Dendritic cell treated with granulocyte-macrophage colony-stimulating factor and Interleukin-4, amounts not matched to agents 40 ng/mL and 50 ng/mL, for 4 days (primary cell): ENCODE measurements at regions of chr13 and their contacts with region 1.

Region 1: DNA sequence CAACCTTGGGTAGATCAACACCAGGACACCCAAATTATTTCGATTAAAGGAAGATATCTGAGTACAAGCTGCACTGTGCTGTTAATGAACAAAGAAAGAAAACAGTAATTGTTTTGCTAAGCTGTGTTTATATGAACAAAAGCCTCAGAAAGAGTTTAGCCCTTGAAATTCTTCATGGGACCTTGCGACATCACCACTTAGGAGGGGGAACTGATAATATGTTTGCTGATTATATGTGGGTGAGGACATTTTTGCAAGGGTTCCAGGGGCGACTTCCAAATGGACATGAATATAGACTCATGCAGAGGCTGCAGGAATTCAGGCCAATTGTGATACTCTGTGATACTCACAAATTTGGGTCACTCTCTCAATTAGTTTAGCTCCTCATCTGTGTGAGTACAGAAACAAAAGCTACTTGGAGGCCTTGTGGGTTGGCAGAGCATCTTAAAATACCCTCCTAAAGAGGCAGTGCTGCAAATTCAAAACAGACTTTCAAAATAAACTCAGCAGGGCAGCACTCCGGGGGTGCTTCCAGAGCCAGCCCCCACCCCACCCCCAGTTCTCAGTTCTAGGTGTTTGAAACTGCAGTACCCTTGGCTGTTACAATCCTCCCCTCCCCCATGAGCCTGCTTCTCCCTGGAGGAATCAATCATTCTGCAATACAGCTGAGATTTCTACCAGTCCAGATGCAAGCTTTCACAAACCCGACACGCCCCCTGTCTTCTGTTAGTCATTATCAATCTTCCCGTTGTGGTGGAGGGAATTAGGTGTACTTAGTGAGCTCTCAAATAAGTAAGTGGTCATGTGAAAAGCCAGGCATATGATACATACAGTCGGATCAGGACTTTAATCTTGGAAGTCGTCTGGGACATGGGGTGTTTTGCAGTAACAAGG is 97.0 kb upstream of the MBNL2 start:
- H3K4me3 Mint-ChIP-seq: no peak overlapping the region
- H3K27ac Mint-ChIP-seq: no peak overlapping the region
- H3K4me1 Mint-ChIP-seq: peaks cover 13% of the 10 kb centered on the region
- H3K27me3 Mint-ChIP-seq: peaks cover 12% of the 10 kb centered on the region

Region 2: GRCh38 chr13:97058391-97058790 is 66.8 kb before region 1 on chr13:
- intact Hi-C with region 1: loop called (anchors 2 kb)
- H3K4me3 Mint-ChIP-seq: no peak overlapping the region
- H3K27ac Mint-ChIP-seq: no peak overlapping the region
- H3K4me1 Mint-ChIP-seq: no peaks in the 10 kb centered on the region
- H3K27me3 Mint-ChIP-seq: peaks cover 17% of the 10 kb centered on the region

Region 3: GRCh38 chr13:97194479-97194878 is 69.3 kb after region 1 on chr13:
- intact Hi-C with region 1: loop called (anchors 10 kb)
- H3K4me3 Mint-ChIP-seq: no peak overlapping the region
- H3K27ac Mint-ChIP-seq: no peak overlapping the region
- H3K4me1 Mint-ChIP-seq: peaks cover 5% of the 10 kb centered on the region
- H3K27me3 Mint-ChIP-seq: peaks cover 28% of the 10 kb centered on the region

Region 4: GRCh38 chr13:97226788-97227627 is 101.8 kb after region 1 on chr13:
- intact Hi-C with region 1: no loop called
- H3K4me3 Mint-ChIP-seq: no peak overlapping the region
- H3K27ac Mint-ChIP-seq: no peak overlapping the region
- H3K4me1 Mint-ChIP-seq: peaks cover 55% of the 10 kb centered on the region
- H3K27me3 Mint-ChIP-seq: no peaks in the 10 kb centered on the region